Heart left ventricle (tissue), 16 donors: ENCODE measurements at regions of chr7 and their contacts with region 1.

Region 1: DNA sequence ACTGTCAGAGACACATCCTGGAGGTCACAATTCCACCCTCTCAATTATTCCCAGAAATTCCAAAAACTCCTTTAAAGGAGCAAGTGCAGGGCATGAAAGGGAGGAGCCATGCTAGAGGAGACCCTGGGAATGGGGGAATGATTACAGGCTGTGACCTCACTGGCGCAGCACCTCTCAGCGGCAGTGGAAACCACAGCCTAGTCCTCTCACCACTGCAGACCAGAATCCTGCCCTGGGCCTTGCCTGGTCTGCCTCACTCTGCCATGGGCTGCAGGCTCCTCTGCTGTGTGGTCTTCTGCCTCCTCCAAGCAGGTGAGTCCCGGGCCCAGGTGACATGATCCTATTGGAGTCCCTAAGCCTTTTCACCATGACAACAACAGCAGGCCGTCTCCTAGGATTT is 50.5 kb upstream of the PRSS58 start:
- DNase-seq: no peak
- ATAC-seq: peak in 1 of 4 donors; percentile 36
- H3K4me3 ChIP-seq: no peak overlapping the region
- H3K27ac ChIP-seq: no peak overlapping the region
- H3K4me1 ChIP-seq: no peaks in the 10 kb centered on the region
- H3K27me3 ChIP-seq: peaks cover 0 to 10% (median 0%) of the 10 kb centered on the region in 9 donors
- CTCF ChIP-seq: no peak
- POLR2A ChIP-seq: no peak

Region 2: GRCh38 chr7:142338633-142339501 is 30.5 kb after region 1 on chr7:
- intact Hi-C with region 1: loop called in 4 of 10 experiments (anchors 1 to 2 kb)
- DNase-seq: no peak
- ATAC-seq: no peak
- H3K4me3 ChIP-seq: no peak overlapping the region
- H3K27ac ChIP-seq: no peak overlapping the region
- H3K4me1 ChIP-seq: no peaks in the 10 kb centered on the region
- H3K27me3 ChIP-seq: peaks cover 0 to 21% (median 0%) of the 10 kb centered on the region in 9 donors
- CTCF ChIP-seq: peak in 3 of 12 donors; percentile 23 to 27 (median 25)
- POLR2A ChIP-seq: no peak

Region 3: DNA sequence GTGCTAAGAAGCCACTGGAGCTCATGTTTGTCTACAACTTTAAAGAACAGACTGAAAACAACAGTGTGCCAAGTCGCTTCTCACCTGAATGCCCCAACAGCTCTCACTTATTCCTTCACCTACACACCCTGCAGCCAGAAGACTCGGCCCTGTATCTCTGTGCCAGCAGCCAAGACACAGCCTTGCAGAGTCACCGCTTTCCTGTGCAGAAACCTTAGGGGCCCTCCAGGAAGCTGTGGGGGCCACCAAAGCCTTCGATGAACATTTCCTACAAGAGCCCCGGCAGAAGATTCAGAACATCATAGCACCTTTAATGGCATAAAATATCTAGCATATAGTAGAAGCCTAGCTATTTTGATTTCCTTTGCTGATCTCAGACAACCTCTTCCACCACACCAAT is 37.5 kb after region 1 on chr7:
- intact Hi-C with region 1: loop called in 5 of 10 experiments (anchors 1 to 2 kb)
- DNase-seq: no peak
- ATAC-seq: no peak
- H3K4me3 ChIP-seq: no peak overlapping the region
- H3K27ac ChIP-seq: no peak overlapping the region
- H3K4me1 ChIP-seq: no peaks in the 10 kb centered on the region
- H3K27me3 ChIP-seq: peaks cover 0 to 24% (median 0%) of the 10 kb centered on the region in 9 donors
- CTCF ChIP-seq: no peak
- POLR2A ChIP-seq: no peak